Naive thymus-derived CD4-positive, alpha-beta T cell (primary cell): ENCODE measurements at regions of chr6 and their contacts with region 1.

Region 1: DNA sequence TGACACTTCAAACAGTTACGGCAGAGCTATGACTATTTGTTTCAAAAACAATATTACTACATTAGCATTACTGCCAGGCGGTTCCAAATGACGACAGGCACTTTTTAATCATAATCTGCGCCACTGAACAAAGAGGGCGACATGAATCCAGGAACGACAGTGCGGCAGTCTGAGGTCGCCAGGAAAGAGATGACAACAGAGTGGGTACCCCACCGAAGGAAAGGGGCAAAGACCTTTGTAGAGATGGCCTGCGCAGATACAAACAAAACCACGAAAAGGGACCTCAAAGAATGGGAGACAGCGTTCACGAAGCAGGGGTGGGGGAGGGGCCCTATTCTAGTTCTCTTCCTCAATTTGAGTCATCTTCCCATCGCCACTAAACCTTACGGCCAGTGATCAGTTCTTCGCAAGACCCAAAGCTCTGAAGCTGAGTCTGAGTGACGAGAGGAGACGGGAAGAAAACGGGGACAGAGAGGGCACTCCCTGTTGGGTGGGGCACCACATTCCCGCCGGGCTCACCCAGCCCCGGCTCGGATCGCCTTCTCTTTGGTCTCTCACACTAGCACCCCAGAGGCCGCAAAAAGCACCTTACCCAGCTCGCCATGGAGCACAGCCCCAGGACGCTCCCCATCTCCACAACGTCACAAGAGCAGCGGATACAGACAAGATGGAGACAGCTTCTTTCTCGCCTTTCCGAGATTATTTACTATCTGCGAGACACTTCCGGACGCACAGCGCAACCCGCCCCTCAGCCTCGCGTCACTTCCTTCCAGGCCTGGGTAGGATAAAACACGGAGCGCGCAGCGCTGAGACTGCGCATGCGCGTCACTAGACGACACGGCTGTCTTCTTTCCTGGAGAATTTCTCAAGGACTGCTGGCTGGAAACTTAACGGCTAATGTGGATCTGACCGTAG is at the start of gene SERINC1:
- DNase-seq: peak; percentile 77 to 96 (median 92)
- ATAC-seq: peak; percentile 96
- H3K4me3 ChIP-seq: peak within 1 kb of the TSS; percentile 87
- H3K4me3 Mint-ChIP-seq: peak within 1 kb of the TSS; percentile 98 to 100 (median 100)
- H3K27ac ChIP-seq: peak within 1 kb of the TSS; percentile 98
- H3K27ac Mint-ChIP-seq: peak within 1 kb of the TSS; percentile 99 to 100 (median 100)
- H3K4me1 ChIP-seq: peaks cover 33 to 34% of the 10 kb centered on the region in 2 donors
- H3K4me1 Mint-ChIP-seq: peaks cover 24 to 53% (median 44%) of the 10 kb centered on the region in 7 donors
- H3K27me3 ChIP-seq: no peaks in the 10 kb centered on the region
- H3K27me3 Mint-ChIP-seq: peaks cover 0 to 2% (median 0%) of the 10 kb centered on the region in 5 donors
- total RNA-seq, gene SERINC1: 63.7 to 139 (median 130) TPM

Region 2: DNA sequence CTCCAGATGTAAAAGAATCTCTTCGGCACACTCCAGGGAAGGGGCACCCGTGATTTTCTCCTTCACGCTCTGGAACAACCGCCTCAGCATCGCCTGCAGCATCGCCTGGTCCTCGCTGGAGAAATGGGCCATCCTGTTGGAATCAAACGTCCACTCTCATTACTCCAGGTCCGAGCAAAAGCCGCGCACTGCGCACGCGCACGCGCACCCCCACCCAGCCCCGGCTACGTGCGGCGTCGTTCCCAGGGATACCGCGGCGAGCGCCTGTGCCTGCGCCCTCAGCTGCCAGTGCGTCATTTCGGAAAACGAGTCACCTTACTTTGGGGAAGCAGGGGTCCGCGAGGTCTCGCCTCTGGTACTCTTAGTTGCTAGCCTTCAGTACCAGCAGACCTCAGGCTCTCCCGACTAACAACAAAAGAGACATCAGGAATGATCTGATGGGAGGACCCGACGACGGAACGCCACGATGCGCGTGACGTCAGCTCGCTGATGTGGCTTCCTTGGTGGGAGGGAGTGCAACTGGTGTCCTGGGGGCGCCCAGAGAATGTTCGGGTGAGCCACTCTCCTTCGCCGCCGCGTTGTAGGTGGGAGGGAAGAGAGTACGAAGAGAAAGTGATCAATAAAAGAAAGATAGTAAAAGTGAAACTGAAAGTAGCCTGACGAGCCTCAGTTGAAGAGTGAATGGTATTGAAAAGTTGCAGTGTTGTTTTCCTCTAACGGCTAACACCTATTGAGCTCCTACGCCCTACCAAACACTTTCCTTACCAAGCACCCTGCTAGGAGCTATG is 1136.9 kb before region 1 on chr6 and contains the start of gene TBC1D32:
- CTCF ChIA-PET with region 1: no interaction called
- POLR2A ChIA-PET with region 1: interaction called, 6 read pairs
- intact Hi-C with region 1: loop called (anchors 1 kb)
- DNase-seq: peak; percentile 84 to 90 (median 89)
- ATAC-seq: peak; percentile 92
- H3K4me3 ChIP-seq: peak within 1 kb of the TSS; percentile 74
- H3K4me3 Mint-ChIP-seq: peak within 1 kb of the TSS; percentile 86 to 99 (median 98)
- H3K27ac ChIP-seq: peak within 1 kb of the TSS; percentile 97
- H3K27ac Mint-ChIP-seq: peak within 1 kb of the TSS; percentile 97 to 100 (median 99)
- H3K4me1 ChIP-seq: peaks cover 4 to 8% of the 10 kb centered on the region in 2 donors
- H3K4me1 Mint-ChIP-seq: peaks cover 16 to 45% (median 35%) of the 10 kb centered on the region in 7 donors
- H3K27me3 ChIP-seq: no peaks in the 10 kb centered on the region
- H3K27me3 Mint-ChIP-seq: peaks cover 0 to 11% (median 0%) of the 10 kb centered on the region in 5 donors
- total RNA-seq, gene TBC1D32: 12.5 to 17.7 (median 15.8) TPM

Region 3: GRCh38 chr6:122399384-122400158 is 71.8 kb before region 1 on chr6 and contains the start of gene HSF2:
- CTCF ChIA-PET with region 1: interaction called, 3 read pairs
- POLR2A ChIA-PET with region 1: interaction called, 11 read pairs
- intact Hi-C with region 1: loop called (anchors 1 kb)
- DNase-seq: peak; percentile 79 to 95 (median 91)
- ATAC-seq: peak; percentile 98
- H3K4me3 ChIP-seq: peak within 1 kb of the TSS; percentile 90
- H3K4me3 Mint-ChIP-seq: peak within 1 kb of the TSS; percentile 89 to 100 (median 99)
- H3K27ac ChIP-seq: peak within 1 kb of the TSS; percentile 87
- H3K27ac Mint-ChIP-seq: peak within 1 kb of the TSS; percentile 93 to 98 (median 97)
- H3K4me1 ChIP-seq: peaks cover 13 to 25% of the 10 kb centered on the region in 2 donors
- H3K4me1 Mint-ChIP-seq: peaks cover 29 to 54% (median 43%) of the 10 kb centered on the region in 7 donors
- H3K27me3 ChIP-seq: no peaks in the 10 kb centered on the region
- H3K27me3 Mint-ChIP-seq: no peaks in the 10 kb centered on the region
- total RNA-seq, gene HSF2: 12.5 to 32.4 (median 26.5) TPM

Region 4: DNA sequence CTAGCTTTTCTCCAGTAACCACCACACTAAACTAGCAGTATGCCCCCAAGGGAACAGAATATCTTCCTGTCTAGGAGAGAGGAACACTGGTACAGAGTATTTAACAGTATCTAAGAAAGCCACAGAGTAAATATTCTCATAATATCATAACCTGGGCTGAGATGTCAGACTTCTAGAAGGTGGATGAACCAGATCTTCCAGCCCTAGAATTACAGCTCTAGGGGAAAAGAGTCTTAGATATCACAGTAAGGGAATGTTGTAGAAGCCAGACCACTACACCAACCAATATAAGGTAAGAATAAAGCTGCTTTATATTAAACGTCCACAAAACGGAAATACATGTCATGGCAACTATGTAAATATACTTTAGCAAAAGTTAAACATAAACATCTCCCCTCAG is 12.2 kb before region 1 on chr6:
- CTCF ChIA-PET with region 1: no interaction called
- POLR2A ChIA-PET with region 1: interaction called, 12 read pairs
- intact Hi-C with region 1: loop called in 1 of 2 experiments (anchors 1 kb)
- DNase-seq: no peak
- ATAC-seq: peak; percentile 12
- H3K4me3 ChIP-seq: no peak overlapping the region
- H3K4me3 Mint-ChIP-seq: peak overlapping the region in 8 of 10 donors; percentile 35 to 98 (median 48)
- H3K27ac ChIP-seq: peak overlapping the region; percentile 41
- H3K27ac Mint-ChIP-seq: peak overlapping the region in 8 of 9 donors; percentile 3 to 83 (median 52)
- H3K4me1 ChIP-seq: peaks cover 57 to 60% of the 10 kb centered on the region in 2 donors
- H3K4me1 Mint-ChIP-seq: peaks cover 33 to 98% (median 87%) of the 10 kb centered on the region in 7 donors
- H3K27me3 ChIP-seq: no peaks in the 10 kb centered on the region
- H3K27me3 Mint-ChIP-seq: no peaks in the 10 kb centered on the region

Region 5: GRCh38 chr6:122609856-122610689 is 138.7 kb after region 1 on chr6 and contains the start of gene PKIB:
- CTCF ChIA-PET with region 1: no interaction called
- POLR2A ChIA-PET with region 1: interaction called, 3 read pairs
- intact Hi-C with region 1: loop called in 1 of 2 experiments (anchors 5 kb)
- DNase-seq: peak; percentile 2 to 59 (median 18)
- ATAC-seq: peak; percentile 85
- H3K4me3 ChIP-seq: peak within 1 kb of the TSS; percentile 78
- H3K4me3 Mint-ChIP-seq: peak within 1 kb of the TSS; percentile 88 to 95 (median 91)
- H3K27ac ChIP-seq: no peak within 1 kb of the TSS
- H3K27ac Mint-ChIP-seq: peak within 1 kb of the TSS in 6 of 9 donors; percentile 18 to 84 (median 56)
- H3K4me1 ChIP-seq: peaks cover 6 to 7% of the 10 kb centered on the region in 2 donors
- H3K4me1 Mint-ChIP-seq: peaks cover 5 to 21% (median 16%) of the 10 kb centered on the region in 7 donors
- H3K27me3 ChIP-seq: peaks cover 0 to 12% of the 10 kb centered on the region in 2 donors
- H3K27me3 Mint-ChIP-seq: peaks cover 14 to 52% (median 46%) of the 10 kb centered on the region in 5 donors
- total RNA-seq, gene PKIB: 0.86 to 1.5 (median 0.91) TPM in 4 of 5 experiments, not detected in the other

Region 6: GRCh38 chr6:122839477-122839876 is 368.1 kb after region 1 on chr6:
- CTCF ChIA-PET with region 1: no interaction called
- POLR2A ChIA-PET with region 1: no interaction called
- intact Hi-C with region 1: loop called in 1 of 2 experiments (anchors 5 kb)
- DNase-seq: peak in 7 of 9 donors; percentile 18 to 47 (median 36)
- ATAC-seq: peak; percentile 79
- H3K4me3 ChIP-seq: no peak overlapping the region
- H3K4me3 Mint-ChIP-seq: no peak overlapping the region
- H3K27ac ChIP-seq: no peak overlapping the region
- H3K27ac Mint-ChIP-seq: no peak overlapping the region
- H3K4me1 ChIP-seq: no peaks in the 10 kb centered on the region
- H3K4me1 Mint-ChIP-seq: no peaks in the 10 kb centered on the region
- H3K27me3 ChIP-seq: no peaks in the 10 kb centered on the region
- H3K27me3 Mint-ChIP-seq: peaks cover 2 to 26% (median 9%) of the 10 kb centered on the region in 5 donors